Left cardiac atrium (tissue), 4 donors: ENCODE measurements at regions of chr10 and their contacts with region 1.

Region 1: GRCh38 chr10:5623081-5623748 is 43.2 kb downstream of the ASB13 start:
- DNase-seq: peak; percentile 93
- ATAC-seq: peak; percentile 80 to 90

Region 2: DNA sequence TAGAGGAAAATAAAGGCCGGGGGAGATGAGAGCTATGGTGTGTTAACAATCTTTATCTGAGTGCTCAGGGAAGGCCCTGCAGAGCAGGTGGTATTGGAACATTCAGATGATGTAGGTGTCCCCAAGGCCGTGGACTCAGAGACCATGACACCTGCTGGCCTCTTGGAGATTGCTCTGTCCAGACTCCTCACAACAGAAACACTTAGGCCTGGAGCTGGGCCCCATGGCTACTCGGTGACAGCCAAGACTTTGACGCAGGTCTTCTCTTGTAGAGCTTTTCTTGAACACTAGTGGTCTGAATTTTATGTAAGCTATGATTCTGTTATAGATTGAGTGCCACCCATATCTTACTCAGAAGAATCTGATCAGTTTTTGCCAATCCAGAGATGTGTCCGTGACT is 783.8 kb before region 1 on chr10:
- intact Hi-C with region 1: loop called in 1 of 2 experiments (anchors 10 kb)
- DNase-seq: no peak
- ATAC-seq: no peak

Region 3: DNA sequence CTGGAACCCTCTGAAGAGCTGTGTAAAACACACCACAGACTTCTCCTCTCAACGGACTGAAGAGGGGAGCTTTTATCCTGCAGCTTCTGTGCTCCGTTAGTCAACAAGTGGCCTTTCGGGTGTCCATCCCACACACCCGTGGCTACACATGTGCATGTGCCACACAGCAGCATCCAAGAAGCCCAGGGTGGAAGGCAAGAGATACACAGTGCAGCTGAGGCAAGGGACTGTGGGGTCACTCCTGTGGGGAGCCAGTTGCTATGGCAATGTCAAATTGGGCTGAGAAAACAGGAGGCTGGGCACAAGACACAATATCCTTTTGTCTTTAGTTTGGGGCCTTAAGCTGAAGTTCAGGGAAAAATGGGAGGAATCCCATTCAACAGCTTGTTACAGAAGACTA is 182.1 kb before region 1 on chr10:
- intact Hi-C with region 1: loop called (anchors 2 to 5 kb)
- DNase-seq: no peak
- ATAC-seq: no peak

Region 4: GRCh38 chr10:5446390-5446926 is 176.8 kb before region 1 on chr10:
- intact Hi-C with region 1: loop called (anchors 2 to 5 kb)
- DNase-seq: peak; percentile 93
- ATAC-seq: peak; percentile 97 to 98

Region 5: GRCh38 chr10:5666008-5666829 is 43.0 kb after region 1 on chr10 and contains the start of gene ASB13:
- intact Hi-C with region 1: no loop called
- DNase-seq: peak; percentile 86
- ATAC-seq: peak; percentile 97 to 99
- total RNA-seq, gene ASB13: 17.1 to 19.1 TPM

Region 6: GRCh38 chr10:5873515-5873995 is 250.3 kb after region 1 on chr10:
- intact Hi-C with region 1: loop called in 1 of 2 experiments (anchors 10 kb)
- DNase-seq: no peak
- ATAC-seq: peak; percentile 75 to 81